Psoas muscle (tissue), 8 donors: ENCODE measurements at regions of chr6 and their contacts with region 1.

Region 1: DNA sequence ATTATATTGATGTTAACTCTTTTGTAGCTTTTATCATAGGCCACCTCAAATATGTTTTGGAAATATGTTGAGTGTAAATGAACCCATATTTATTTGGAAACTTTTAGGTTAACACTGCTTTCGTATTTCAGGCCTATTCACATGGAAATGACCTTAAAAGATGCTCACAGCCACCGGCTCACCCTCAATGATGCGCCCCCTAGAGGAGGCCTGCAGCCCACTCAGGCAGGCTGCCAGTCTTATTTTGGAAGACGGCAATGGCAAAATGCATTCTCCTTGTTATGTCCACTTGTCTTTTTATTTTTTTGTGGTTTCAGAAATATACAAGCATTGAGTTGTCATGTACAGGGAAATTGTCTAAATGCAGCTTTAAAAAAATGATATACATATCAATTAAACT is 869.7 kb downstream of the PHF3 start:
- DNase-seq: no peak
- ATAC-seq: no peak
- H3K4me3 ChIP-seq: no peak overlapping the region
- H3K27ac ChIP-seq: no peak overlapping the region
- H3K4me1 ChIP-seq: no peaks in the 10 kb centered on the region
- H3K27me3 ChIP-seq: no peaks in the 10 kb centered on the region
- CTCF ChIP-seq: no peak

Region 2: GRCh38 chr6:64712606-64713005 is 207.3 kb after region 1 on chr6:
- intact Hi-C with region 1: loop called in 1 of 2 experiments (anchors 5 kb)
- DNase-seq: no peak
- ATAC-seq: no peak
- H3K4me3 ChIP-seq: no peak overlapping the region
- H3K27ac ChIP-seq: no peak overlapping the region
- H3K4me1 ChIP-seq: no peaks in the 10 kb centered on the region
- H3K27me3 ChIP-seq: no peaks in the 10 kb centered on the region
- CTCF ChIP-seq: no peak

Region 3: GRCh38 chr6:65191471-65191870 is 686.2 kb after region 1 on chr6:
- intact Hi-C with region 1: no loop called
- DNase-seq: no peak
- ATAC-seq: no peak
- H3K4me3 ChIP-seq: no peak overlapping the region
- H3K27ac ChIP-seq: no peak overlapping the region
- H3K4me1 ChIP-seq: no peaks in the 10 kb centered on the region
- H3K27me3 ChIP-seq: no peaks in the 10 kb centered on the region
- CTCF ChIP-seq: no peak